ENCODE measurements at regions of chr4 and their contacts with region 1.

Region 1: GRCh38 chr4:81471588-81472288 is at the start of gene RASGEF1B:
- DNase-seq: peak; percentile 78 to 95
- H3K4me3 ChIP-seq: peak within 1 kb of the TSS; percentile 76 to 94
- H3K27ac ChIP-seq: peak within 1 kb of the TSS; percentile 84 to 92
- H3K4me1 ChIP-seq: peaks cover 0 to 10% of the 10 kb centered on the region in 2 donors
- H3K27me3 ChIP-seq: no peaks in the 10 kb centered on the region
- CTCF ChIP-seq: peak in 1 of 3 experiments; percentile 24
- total RNA-seq, gene RASGEF1B: 8.4 TPM

Region 2: DNA sequence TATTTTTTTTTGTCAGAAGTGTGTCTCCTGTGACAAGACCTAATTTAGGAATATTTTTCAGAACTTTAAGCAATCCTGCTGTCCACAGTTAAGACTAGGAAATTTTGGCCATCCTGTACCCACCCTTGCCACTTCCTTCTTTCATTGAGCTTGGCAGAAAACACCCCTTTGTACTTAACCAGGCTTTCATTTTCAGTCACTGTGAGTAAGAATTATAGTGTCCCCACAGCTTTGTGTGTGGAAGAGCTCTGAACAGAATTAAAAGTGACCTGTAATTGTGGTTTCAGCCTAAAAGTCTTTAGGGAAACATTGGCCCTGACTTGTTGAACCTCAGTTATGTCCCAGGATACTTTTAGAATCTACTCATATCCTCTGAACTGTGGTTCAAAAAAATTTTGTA is 594.9 kb before region 1 on chr4:
- intact Hi-C with region 1: no loop called
- DNase-seq: no peak
- H3K4me3 ChIP-seq: no peak overlapping the region
- H3K27ac ChIP-seq: no peak overlapping the region
- H3K4me1 ChIP-seq: no peaks in the 10 kb centered on the region
- H3K27me3 ChIP-seq: no peaks in the 10 kb centered on the region
- CTCF ChIP-seq: no peak

Region 3: DNA sequence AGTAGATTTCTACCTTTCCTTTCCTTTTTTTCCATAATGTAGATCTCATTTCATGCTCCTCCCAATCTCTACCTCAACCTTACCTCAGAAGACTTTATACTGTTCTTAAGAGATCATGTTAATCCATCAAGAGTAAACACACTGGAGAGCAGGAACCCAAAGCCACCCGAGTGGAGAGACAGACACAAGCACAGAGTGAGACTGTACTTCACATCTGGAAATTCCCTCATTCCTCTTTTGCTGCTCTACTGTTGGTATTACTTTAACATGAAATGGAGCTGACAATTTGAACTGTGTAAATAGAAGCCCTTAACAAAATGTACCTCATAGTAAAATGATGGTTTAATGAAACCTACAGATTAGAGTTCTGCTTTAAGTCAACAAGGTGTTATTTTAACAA is 105.7 kb after region 1 on chr4:
- intact Hi-C with region 1: no loop called
- DNase-seq: no peak
- H3K4me3 ChIP-seq: no peak overlapping the region
- H3K27ac ChIP-seq: no peak overlapping the region
- H3K4me1 ChIP-seq: no peaks in the 10 kb centered on the region
- H3K27me3 ChIP-seq: no peaks in the 10 kb centered on the region
- CTCF ChIP-seq: no peak

Region 4: GRCh38 chr4:81724925-81725329 is 253.2 kb after region 1 on chr4:
- intact Hi-C with region 1: no loop called
- DNase-seq: peak; percentile 50 to 78
- H3K4me3 ChIP-seq: no peak overlapping the region
- H3K27ac ChIP-seq: no peak overlapping the region
- H3K4me1 ChIP-seq: no peaks in the 10 kb centered on the region
- H3K27me3 ChIP-seq: no peaks in the 10 kb centered on the region
- CTCF ChIP-seq: no peak

Region 5: DNA sequence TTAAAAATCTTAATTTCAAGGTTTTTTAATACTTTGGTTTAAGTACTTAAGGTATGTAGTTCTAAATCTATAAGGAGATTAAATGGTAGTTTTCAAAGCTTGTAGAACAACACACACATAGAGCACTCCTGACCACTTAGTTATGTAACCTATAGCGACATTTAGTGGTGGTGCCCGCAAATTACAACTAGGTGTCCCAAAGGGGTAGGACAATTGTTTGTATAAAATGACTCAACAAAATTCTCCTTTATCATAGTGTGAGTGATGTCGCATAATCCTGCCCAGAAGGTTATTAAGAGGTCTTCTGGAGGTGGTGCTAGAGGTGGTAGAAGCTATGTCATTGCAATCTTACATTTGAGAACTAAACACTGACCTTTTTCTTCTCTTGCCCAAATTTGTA is 373.0 kb after region 1 on chr4:
- intact Hi-C with region 1: loop called (anchors 1 kb)
- DNase-seq: peak in 1 of 2 donors; percentile 87
- H3K4me3 ChIP-seq: no peak overlapping the region
- H3K27ac ChIP-seq: no peak overlapping the region
- H3K4me1 ChIP-seq: no peaks in the 10 kb centered on the region
- H3K27me3 ChIP-seq: no peaks in the 10 kb centered on the region
- CTCF ChIP-seq: peak; percentile 49 to 70 (median 69)

Region 6: DNA sequence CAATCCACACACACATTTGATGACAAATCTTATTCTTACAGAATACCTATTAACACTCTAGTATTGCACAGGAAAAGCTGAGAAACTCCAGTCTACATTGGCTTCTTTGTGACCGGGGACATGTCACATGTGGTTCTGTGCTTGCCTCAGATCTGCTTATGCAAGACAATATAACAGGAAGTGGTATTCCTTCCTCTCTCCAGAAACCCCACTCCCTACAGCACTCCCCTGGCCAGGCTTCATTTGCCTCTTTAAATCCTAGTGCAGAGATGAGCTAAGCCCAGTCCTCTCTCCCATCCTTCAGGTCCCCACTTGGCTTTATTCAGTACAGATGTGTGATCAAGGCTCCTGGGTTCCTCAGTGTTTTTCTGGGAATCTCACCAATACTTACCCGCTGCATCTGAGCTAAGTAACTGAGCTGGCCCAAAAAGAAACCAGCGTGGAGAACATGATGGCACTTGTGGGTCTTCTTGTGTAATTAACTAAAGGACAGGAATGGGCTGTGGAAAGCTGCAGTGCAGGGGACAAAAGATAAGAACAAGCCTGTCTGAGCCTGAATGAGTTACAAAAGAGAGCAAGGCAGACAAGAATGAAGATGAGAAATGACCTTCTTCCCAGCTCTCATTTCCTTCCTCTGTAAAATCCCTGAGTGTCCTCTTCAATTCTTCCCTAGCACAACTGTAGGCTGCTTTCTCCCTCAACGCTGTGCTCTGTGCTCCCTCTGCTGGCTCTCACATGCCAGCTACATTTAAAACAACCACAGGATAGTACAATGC is 796.5 kb after region 1 on chr4:
- intact Hi-C with region 1: loop called (anchors 1 kb)
- DNase-seq: peak in 1 of 2 donors; percentile 69
- H3K4me3 ChIP-seq: no peak overlapping the region
- H3K27ac ChIP-seq: no peak overlapping the region
- H3K4me1 ChIP-seq: no peaks in the 10 kb centered on the region
- H3K27me3 ChIP-seq: no peaks in the 10 kb centered on the region
- CTCF ChIP-seq: peak; percentile 33 to 74 (median 60)

Region 7: GRCh38 chr4:82284858-82285805 is 813.4 kb after region 1 on chr4:
- intact Hi-C with region 1: loop called (anchors 2 kb)
- DNase-seq: peak; percentile 99 to 100
- H3K4me3 ChIP-seq: peak overlapping the region; percentile 53 to 58
- H3K27ac ChIP-seq: peak overlapping the region; percentile 58 to 66
- H3K4me1 ChIP-seq: peaks cover 0 to 5% of the 10 kb centered on the region in 2 donors
- H3K27me3 ChIP-seq: no peaks in the 10 kb centered on the region
- CTCF ChIP-seq: peak; percentile 70 to 100 (median 100)

Region 8: GRCh38 chr4:83012687-83013419 is 1541.1 kb after region 1 on chr4:
- intact Hi-C with region 1: loop called (anchors 5 kb)
- DNase-seq: peak; percentile 75 to 97
- H3K4me3 ChIP-seq: peak overlapping the region; percentile 78 to 88
- H3K27ac ChIP-seq: peak overlapping the region; percentile 71 to 89
- H3K4me1 ChIP-seq: peaks cover 0 to 19% of the 10 kb centered on the region in 2 donors
- H3K27me3 ChIP-seq: no peaks in the 10 kb centered on the region
- CTCF ChIP-seq: peak; percentile 60 to 70 (median 63)

Measured in ascending aorta (tissue), 2 donors.